Activated CD4-positive, alpha-beta T cell treated with anti-CD3 and anti-CD28 coated beads, Interleukin-2, amount 10 ng/mL, durations not matched to agents 7 days and 5 days (primary cell): ENCODE measurements at regions of chr9 and their contacts with region 1.

Region 1: DNA sequence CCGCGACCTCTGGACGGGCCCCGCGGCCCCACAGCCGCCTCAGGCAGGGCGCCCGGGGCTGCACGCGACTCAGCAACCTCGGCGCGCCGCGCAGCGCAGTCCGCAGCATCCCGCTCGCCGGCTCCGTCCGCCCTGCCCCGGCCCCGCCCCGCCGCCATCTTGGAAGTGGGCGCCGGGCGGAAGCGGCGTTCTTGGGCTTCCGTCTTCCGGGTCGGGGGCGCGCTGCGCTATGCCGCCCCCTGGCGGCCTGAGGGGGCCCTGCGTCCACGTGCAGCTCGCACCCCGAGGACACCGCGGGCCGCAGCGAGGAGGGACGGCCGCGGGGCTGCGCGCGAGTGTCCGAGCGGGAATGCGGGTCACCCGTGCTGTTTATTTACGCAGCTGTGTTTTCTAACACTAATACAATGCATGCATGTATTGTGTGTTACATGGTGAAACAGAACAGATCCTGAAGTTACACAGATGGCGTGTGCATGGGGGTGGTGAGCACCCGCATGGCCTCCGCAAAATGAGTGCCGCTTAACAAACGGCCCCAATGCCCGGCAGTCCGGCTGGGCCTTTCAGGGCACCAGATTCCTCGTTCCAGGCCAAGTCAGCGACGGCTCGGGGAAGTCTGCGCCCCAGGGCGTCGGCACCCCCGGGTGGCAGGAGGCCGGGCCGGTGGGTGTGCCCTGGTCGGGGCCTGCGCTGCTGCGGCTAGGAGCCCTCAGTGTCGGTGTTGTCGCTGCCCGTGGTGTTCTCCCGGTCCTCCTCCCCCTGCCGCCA is at the start of gene DNLZ:
- DNase-seq: peak; percentile 88
- H3K4me3 Mint-ChIP-seq: peak within 1 kb of the TSS; percentile 84
- H3K27ac Mint-ChIP-seq: peak within 1 kb of the TSS; percentile 92
- H3K4me1 Mint-ChIP-seq: peaks cover 4% of the 10 kb centered on the region
- H3K27me3 Mint-ChIP-seq: no peaks in the 10 kb centered on the region
- total RNA-seq, gene DNLZ: 13.1 to 14.6 TPM

Region 2: DNA sequence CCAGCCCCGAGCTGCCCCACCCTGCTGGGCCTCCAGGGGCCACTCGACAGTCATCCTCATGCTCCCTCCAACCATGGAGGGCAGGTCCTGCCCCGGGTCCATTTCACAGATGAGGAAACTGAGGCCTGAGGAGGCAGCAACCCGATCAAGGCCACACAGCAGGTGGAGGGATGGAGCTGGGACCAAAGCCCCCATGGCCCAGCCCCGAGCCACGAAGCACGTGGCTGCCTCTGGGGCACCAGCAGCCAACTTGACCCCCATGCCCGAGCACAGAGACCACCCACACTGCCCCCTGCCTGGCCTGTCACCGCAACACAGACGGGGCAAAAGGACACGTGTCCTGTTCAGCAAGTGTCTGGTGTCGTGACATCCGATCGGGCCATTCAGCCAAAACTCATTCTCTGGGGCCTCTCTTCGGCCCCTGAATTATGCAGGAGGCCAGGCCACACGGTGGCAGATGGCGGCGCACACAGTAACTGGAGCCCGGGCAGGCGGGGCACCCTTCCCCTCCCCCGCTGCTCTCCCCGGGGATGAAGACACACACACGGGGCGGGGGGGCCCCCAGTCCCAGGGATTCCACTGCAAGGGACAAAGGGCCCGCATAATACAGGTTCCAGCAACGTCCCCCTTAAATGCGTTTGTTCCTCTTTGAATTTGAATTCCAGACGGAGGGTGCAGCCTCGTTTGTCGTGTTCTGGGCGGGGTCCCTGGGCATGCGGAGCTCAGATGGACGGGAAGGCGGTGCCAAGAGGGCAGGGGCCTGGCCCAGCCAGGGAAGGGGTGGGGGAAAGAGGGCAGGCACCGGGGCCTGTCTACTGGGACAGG is 215.7 kb before region 1 on chr9:
- CTCF ChIA-PET with region 1: no interaction called
- POLR2A ChIA-PET with region 1: no interaction called
- DNase-seq: no peak
- H3K4me3 Mint-ChIP-seq: no peak overlapping the region
- H3K27ac Mint-ChIP-seq: no peak overlapping the region
- H3K4me1 Mint-ChIP-seq: no peaks in the 10 kb centered on the region
- H3K27me3 Mint-ChIP-seq: no peaks in the 10 kb centered on the region

Region 3: GRCh38 chr9:136385015-136385414 is 21.2 kb after region 1 on chr9:
- CTCF ChIA-PET with region 1: interaction called, 106 read pairs
- POLR2A ChIA-PET with region 1: no interaction called
- DNase-seq: peak; percentile 73
- H3K4me3 Mint-ChIP-seq: peak overlapping the region; percentile 24
- H3K27ac Mint-ChIP-seq: peak overlapping the region; percentile 77
- H3K4me1 Mint-ChIP-seq: peaks cover 35% of the 10 kb centered on the region
- H3K27me3 Mint-ChIP-seq: no peaks in the 10 kb centered on the region